ENCODE measurements at regions of chr1 and their contacts with region 1.

Region 1: GRCh38 chr1:155437405-155437804 is 116.7 kb downstream of the RUSC1 start:
- DNase-seq: no peak
- H3K4me3 Mint-ChIP-seq: no peak overlapping the region
- H3K27ac Mint-ChIP-seq: no peak overlapping the region
- H3K4me1 Mint-ChIP-seq: no peaks in the 10 kb centered on the region
- H3K27me3 Mint-ChIP-seq: no peaks in the 10 kb centered on the region

Region 2: DNA sequence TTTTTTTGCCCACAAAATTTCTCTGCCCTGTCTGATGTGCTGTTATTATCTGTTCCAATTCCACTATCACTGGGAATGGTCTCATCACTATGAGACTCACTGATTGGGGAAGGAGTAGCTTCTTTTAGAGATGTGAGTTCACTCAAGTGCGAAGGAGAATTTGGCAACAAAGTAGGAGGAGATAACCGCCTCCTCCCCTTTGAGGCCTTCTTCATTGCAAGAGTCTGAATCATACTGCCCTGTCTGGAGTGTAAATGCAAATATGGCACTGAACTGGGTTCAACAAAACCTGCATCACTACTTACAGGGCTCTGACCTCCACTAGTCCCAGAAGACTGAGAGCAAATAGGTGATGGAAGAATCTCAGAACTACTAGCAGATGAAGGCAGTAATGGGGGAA is 41.8 kb after region 1 on chr1:
- intact Hi-C with region 1: loop called (anchors 5 kb)
- DNase-seq: no peak
- H3K4me3 Mint-ChIP-seq: no peak overlapping the region
- H3K27ac Mint-ChIP-seq: no peak overlapping the region
- H3K4me1 Mint-ChIP-seq: peaks cover 30% of the 10 kb centered on the region
- H3K27me3 Mint-ChIP-seq: no peaks in the 10 kb centered on the region

Measured in activated T-helper 1 cell treated with anti-CD3 and anti-CD28 coated beads, Interleukin-12 subunit alpha, Interleukin-12 subunit beta, Interleukin-2, Interleukin-4 antibody, amounts not matched to agents 30 ng/mL and 10 ng/mL and 1 ng/mL, durations not matched to agents 14 hours and 24 hours and 36 hours (primary cell).